ENCODE measurements at regions of chr9 and their contacts with region 1.

Region 1: GRCh38 chr9:113309204-113309813 is 6.1 kb upstream of the RNF183 start:
- DNase-seq: peak; percentile 31 to 42
- ATAC-seq: peak; percentile 78; a peak in 4 of 6 replicates
- H3K4me3 ChIP-seq: no peak overlapping the region
- H3K27ac ChIP-seq: no peak overlapping the region
- H3K4me1 ChIP-seq: no peaks in the 10 kb centered on the region
- CTCF ChIP-seq: peak; percentile 81
- EP300 ChIP-seq: no peak
- POLR2A ChIP-seq: no peak
- RAD21 ChIP-seq: peak; percentile 74 to 83

Region 2: DNA sequence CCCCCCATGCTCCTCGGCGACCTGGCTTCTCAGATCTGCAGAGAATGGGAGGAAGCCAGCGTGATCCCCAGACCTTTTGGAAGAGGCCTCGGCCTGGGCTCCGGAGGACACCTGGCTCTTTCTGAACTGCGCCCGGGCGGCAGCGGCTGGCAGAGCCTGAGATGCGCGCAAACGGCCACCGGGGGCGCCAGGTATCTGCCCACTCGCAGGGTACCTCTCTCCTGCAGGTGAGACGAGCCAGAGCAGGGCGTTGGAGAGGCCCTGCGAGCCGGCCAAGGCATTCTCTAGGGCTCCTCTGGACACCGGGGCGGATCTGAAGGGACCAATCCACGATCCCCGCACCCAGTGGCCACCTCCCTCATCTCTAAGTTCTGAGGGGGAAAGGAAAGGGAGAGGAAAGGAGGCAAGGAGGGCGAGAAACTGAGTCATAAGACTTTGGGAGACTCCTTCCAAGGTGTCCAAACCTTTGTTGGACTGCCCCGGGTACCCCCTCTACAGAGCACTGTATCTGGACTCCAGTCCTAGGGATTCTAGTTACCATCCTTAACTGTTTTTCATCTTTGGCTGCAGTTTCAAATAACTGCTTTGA is 363.6 kb before region 1 on chr9:
- CTCF ChIA-PET with region 1: no interaction called
- POLR2A ChIA-PET with region 1: no interaction called
- DNase-seq: peak; percentile 12 to 16
- ATAC-seq: peak; percentile 64 to 88; a peak in 4 of 6 replicates
- H3K4me3 ChIP-seq: no peak overlapping the region
- H3K27ac ChIP-seq: no peak overlapping the region
- H3K4me1 ChIP-seq: no peaks in the 10 kb centered on the region
- CTCF ChIP-seq: no peak
- EP300 ChIP-seq: no peak
- POLR2A ChIP-seq: no peak
- RAD21 ChIP-seq: no peak

Region 3: DNA sequence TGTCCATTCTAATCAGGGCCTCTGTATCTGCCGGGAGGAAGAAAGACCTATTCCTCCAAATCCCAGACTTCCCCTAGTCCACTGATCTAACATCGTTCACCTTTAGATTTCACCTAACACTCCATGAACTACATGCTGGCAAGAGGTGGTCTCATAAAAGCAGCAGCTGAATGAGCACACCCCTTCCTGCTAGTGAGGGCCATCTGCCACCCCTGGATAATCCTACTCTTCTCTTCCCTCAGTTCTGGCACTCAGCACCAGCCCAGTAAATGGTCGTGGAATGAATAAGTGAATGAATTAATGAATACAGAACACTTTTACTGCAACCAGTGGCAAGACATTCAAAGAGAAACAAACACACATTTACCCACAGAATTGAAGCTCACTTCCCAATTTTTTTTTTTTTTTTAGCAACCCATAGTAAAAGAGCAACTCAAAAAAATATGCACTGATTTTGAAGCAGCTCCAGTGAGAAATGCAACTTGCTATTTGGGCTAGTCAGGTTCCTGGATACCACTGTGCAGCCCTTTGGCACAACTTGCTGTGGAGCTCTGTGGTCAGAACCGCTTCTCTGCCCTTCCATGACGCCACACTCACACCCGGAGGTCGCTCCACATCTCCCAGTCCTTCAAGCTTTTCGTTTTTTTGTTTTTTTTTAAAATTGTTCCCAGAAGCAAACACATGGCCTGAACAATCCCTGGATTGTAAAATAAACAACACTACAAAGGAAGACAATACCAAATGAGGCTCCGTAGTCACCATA is 12.3 kb before region 1 on chr9:
- CTCF ChIA-PET with region 1: interaction called, 20 read pairs
- POLR2A ChIA-PET with region 1: interaction called, 3 read pairs
- DNase-seq: no peak
- ATAC-seq: no peak
- H3K4me3 ChIP-seq: no peak overlapping the region
- H3K27ac ChIP-seq: no peak overlapping the region
- H3K4me1 ChIP-seq: no peaks in the 10 kb centered on the region
- CTCF ChIP-seq: no peak
- EP300 ChIP-seq: no peak
- POLR2A ChIP-seq: no peak
- RAD21 ChIP-seq: no peak

Region 4: DNA sequence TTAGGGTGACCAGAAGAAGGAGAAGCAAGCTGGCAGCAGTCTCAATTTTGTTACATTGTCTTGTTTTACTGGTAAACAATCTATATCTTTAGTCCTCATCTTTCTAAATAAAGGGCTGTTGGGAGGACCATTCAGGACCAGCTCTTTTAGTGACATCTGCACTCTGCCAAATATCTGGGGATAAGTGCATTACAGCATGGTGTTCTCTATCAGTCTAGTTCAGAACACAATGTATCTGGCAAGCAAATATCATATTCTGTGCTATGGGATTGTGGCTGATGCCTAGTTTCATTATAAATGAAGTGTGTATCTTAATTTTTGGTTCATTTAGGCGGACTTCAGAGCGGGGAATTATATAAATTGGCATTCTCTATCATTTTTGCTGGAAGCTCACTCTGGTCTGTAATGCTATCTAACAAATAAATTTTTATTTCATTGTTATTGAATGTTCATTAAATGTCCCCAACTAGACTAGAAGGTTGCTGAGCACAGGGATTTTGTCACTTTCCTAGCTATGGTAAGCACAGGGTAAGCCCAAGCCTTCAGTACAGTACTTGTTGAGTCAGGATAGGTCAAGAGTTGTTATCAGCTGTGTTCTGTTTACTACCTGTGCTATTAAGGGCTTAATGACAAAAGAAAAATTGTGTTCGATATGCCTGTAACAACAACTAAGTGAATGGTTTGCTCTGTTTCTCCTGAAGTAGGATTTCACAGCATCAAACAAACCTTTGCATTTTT is 18.9 kb after region 1 on chr9:
- CTCF ChIA-PET with region 1: interaction called, 10 read pairs
- POLR2A ChIA-PET with region 1: no interaction called
- DNase-seq: no peak
- ATAC-seq: no peak
- H3K4me3 ChIP-seq: no peak overlapping the region
- H3K27ac ChIP-seq: no peak overlapping the region
- H3K4me1 ChIP-seq: no peaks in the 10 kb centered on the region
- CTCF ChIP-seq: no peak
- EP300 ChIP-seq: no peak
- POLR2A ChIP-seq: no peak
- RAD21 ChIP-seq: no peak

Region 5: GRCh38 chr9:113436728-113437471 is 127.6 kb after region 1 on chr9:
- CTCF ChIA-PET with region 1: no interaction called
- POLR2A ChIA-PET with region 1: no interaction called
- DNase-seq: peak in 1 of 2 experiments; percentile 29
- ATAC-seq: peak in 1 of 2 experiments; percentile 82; a peak in 3 of 6 replicates
- H3K4me3 ChIP-seq: no peak overlapping the region
- H3K27ac ChIP-seq: no peak overlapping the region
- H3K4me1 ChIP-seq: peaks cover 7% of the 10 kb centered on the region; the same call in 1 of the 3 replicates
- CTCF ChIP-seq: no peak
- EP300 ChIP-seq: no peak
- POLR2A ChIP-seq: no peak
- RAD21 ChIP-seq: no peak

Measured in A549 (cell line).